CD8-positive, alpha-beta T cell (primary cell): ENCODE measurements at regions of chr17 and their contacts with region 1.

Region 1: DNA sequence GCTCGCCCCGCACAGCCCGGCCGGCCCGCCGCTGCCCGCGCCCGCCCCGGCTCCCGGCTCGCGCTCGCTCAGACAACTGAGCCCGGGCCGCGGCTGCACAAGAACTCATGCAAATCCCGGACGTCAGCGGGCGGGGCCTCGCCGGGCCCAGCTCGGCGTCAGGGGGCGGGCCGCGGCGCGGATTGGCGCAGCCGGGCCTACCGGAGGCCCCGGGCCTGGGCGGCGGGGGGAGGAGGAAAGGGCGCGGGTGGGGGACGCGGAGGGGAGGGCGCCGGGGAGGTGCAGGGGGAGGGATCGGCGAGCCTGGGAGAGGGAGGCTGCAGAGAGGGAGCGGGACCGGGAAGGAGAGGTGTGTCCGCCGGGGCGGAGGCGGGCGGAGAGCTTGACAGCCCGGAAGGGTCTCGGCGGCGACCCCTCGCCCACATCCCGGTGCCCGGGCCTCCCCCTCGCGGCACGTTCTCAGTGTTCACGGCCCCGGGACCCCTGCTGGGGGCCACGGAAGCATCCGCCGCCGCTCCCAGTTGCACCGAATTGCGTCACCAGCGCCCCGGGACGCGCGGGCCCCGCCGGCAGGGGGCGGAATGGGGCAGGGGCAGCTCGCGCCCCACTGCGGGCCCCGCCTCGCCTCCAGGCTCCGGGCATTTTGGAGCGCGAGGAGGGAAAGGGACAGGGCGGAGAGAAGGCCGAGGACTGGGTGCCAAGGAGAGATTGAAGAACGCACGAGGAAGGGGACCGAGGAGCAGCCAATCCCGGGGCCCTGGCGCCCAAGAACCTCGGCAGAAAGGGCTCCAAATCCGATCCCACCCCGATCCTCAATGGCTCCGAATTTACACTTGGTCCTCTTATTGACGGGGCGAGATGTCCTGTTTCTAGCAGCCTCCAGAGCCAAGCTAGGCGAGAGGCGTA is at the start of gene CBX4:
- DNase-seq: peak; percentile 83 to 96 (median 92)
- ATAC-seq: peak; percentile 72
- H3K4me3 ChIP-seq: peak within 1 kb of the TSS; percentile 85 to 90
- H3K4me3 Mint-ChIP-seq: peak within 1 kb of the TSS; percentile 98
- H3K27ac ChIP-seq: peak within 1 kb of the TSS; percentile 68 to 89
- H3K27ac Mint-ChIP-seq: peak within 1 kb of the TSS; percentile 98
- H3K4me1 ChIP-seq: peaks cover 81% of the 10 kb centered on the region
- H3K4me1 Mint-ChIP-seq: peaks cover 44% of the 10 kb centered on the region
- H3K27me3 ChIP-seq: peaks cover 36 to 40% of the 10 kb centered on the region in 2 experiments
- H3K27me3 Mint-ChIP-seq: peaks cover 22% of the 10 kb centered on the region
- CTCF ChIP-seq: peak; percentile 75
- total RNA-seq, gene CBX4: 263 to 268 TPM

Region 2: DNA sequence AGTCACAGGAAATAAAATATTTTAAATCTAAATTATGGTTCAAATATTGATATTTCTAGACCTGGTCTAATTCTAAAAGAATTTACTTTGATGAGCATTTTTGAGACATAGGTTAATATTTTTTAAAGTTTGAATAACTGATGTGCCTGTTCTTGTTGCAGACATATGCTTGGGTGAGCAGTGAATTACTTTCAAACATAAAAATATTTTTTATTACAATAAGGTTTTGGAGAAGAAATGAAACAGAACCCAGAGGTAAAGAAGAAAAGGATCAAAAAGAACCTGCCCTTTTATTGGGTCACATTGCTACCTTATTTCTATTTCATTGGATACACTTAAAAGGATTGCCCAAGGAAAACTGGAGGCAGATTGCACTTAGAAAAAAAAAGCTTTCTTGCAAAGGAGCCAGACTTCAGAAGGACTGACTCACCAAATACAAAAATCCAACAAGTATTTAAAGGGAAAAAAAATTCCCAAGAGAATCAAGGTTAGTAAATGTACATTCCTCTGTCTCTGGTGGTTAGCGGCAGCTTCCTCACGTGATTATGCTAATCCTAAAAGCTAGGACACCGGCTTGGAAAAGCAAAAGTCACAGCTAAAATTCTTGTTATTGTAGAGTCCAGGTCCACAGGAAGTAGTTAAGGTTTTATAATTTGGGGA is 90.3 kb before region 1 on chr17:
- CTCF ChIA-PET with region 1: interaction called, 4 read pairs
- POLR2A ChIA-PET with region 1: no interaction called
- intact Hi-C with region 1: loop called in 1 of 2 experiments (anchors 1 kb)
- DNase-seq: no peak
- ATAC-seq: no peak
- H3K4me3 ChIP-seq: no peak overlapping the region
- H3K4me3 Mint-ChIP-seq: no peak overlapping the region
- H3K27ac ChIP-seq: no peak overlapping the region
- H3K27ac Mint-ChIP-seq: no peak overlapping the region
- H3K4me1 ChIP-seq: peaks cover 24% of the 10 kb centered on the region
- H3K4me1 Mint-ChIP-seq: peaks cover 17% of the 10 kb centered on the region
- H3K27me3 ChIP-seq: peaks cover 20 to 31% of the 10 kb centered on the region in 2 experiments
- H3K27me3 Mint-ChIP-seq: peaks cover 46% of the 10 kb centered on the region
- CTCF ChIP-seq: no peak

Region 3: DNA sequence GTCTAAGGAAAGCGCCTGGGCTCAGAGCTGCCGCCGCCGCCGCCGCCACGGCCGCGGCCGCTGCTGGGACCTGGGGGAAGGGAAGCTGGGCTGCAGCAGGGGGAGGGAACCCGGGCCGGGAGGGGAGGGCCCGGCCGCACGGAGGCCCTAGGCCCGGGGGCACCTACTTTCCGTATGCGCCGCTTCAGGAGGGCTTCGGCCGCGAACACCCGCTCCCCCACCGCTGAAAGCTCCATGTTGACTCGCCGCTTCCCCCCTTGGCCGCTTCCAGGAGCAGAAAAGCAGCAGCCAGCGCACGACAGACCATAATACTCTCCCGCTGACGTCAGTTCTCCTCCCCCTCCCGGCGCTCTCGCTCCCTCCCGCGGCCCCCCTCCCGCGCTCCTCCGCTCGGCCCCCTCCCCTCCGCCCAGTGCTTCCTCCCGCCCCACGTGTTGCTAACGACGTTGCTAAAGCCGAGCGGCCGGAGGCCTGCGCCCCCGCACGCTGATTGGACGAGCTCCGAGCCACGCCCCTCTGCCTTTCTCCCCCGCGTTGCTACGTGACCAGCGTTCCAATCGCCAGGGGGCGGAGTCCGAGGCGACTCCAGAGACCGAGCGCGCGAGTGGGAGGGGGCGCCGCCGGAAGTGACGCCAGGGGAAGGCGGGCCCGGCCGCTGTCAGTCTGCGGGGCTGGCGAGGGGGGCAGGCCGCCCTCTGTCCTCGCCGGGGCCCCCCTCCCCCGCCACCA is 42.7 kb before region 1 on chr17 and contains the start of gene CBX8:
- CTCF ChIA-PET with region 1: interaction called, 13 read pairs
- POLR2A ChIA-PET with region 1: interaction called, 41 read pairs
- intact Hi-C with region 1: loop called (anchors 1 kb)
- DNase-seq: peak; percentile 98 to 100 (median 99)
- ATAC-seq: peak; percentile 87
- H3K4me3 ChIP-seq: peak within 1 kb of the TSS; percentile 51 to 68
- H3K4me3 Mint-ChIP-seq: peak within 1 kb of the TSS; percentile 86
- H3K27ac ChIP-seq: peak within 1 kb of the TSS; percentile 60 to 72
- H3K27ac Mint-ChIP-seq: peak within 1 kb of the TSS; percentile 91
- H3K4me1 ChIP-seq: peaks cover 48% of the 10 kb centered on the region
- H3K4me1 Mint-ChIP-seq: peaks cover 38% of the 10 kb centered on the region
- H3K27me3 ChIP-seq: peaks cover 47 to 48% of the 10 kb centered on the region in 2 experiments
- H3K27me3 Mint-ChIP-seq: peaks cover 37% of the 10 kb centered on the region
- CTCF ChIP-seq: no peak
- total RNA-seq, gene CBX8: 3.7 to 4.0 TPM

Region 4: GRCh38 chr17:79810130-79811010 is 29.2 kb before region 1 on chr17:
- CTCF ChIA-PET with region 1: interaction called, 20 read pairs
- POLR2A ChIA-PET with region 1: interaction called, 66 read pairs
- intact Hi-C with region 1: loop called (anchors 1 to 2 kb)
- DNase-seq: peak; percentile 48 to 91 (median 74)
- ATAC-seq: peak; percentile 91
- H3K4me3 ChIP-seq: no peak overlapping the region
- H3K4me3 Mint-ChIP-seq: no peak overlapping the region
- H3K27ac ChIP-seq: no peak overlapping the region
- H3K27ac Mint-ChIP-seq: no peak overlapping the region
- H3K4me1 ChIP-seq: peaks cover 40% of the 10 kb centered on the region
- H3K4me1 Mint-ChIP-seq: peaks cover 28% of the 10 kb centered on the region
- H3K27me3 ChIP-seq: peaks cover 75 to 82% of the 10 kb centered on the region in 2 experiments
- H3K27me3 Mint-ChIP-seq: peaks cover 67% of the 10 kb centered on the region
- CTCF ChIP-seq: no peak

Region 5: GRCh38 chr17:79997011-79997660 is 157.5 kb after region 1 on chr17:
- CTCF ChIA-PET with region 1: interaction called, 3 read pairs
- POLR2A ChIA-PET with region 1: interaction called, 14 read pairs
- intact Hi-C with region 1: loop called (anchors 2 kb)
- DNase-seq: peak; percentile 59 to 97 (median 77)
- ATAC-seq: peak; percentile 94
- H3K4me3 ChIP-seq: peak overlapping the region; percentile 35 to 42
- H3K4me3 Mint-ChIP-seq: peak overlapping the region; percentile 75
- H3K27ac ChIP-seq: peak overlapping the region; percentile 63 to 88
- H3K27ac Mint-ChIP-seq: peak overlapping the region; percentile 94
- H3K4me1 ChIP-seq: peaks cover 50% of the 10 kb centered on the region
- H3K4me1 Mint-ChIP-seq: peaks cover 50% of the 10 kb centered on the region
- H3K27me3 ChIP-seq: peaks cover 0 to 6% of the 10 kb centered on the region in 2 experiments
- H3K27me3 Mint-ChIP-seq: no peaks in the 10 kb centered on the region
- CTCF ChIP-seq: no peak

Region 6: GRCh38 chr17:80892019-80892855 is 1052.6 kb after region 1 on chr17:
- CTCF ChIA-PET with region 1: no interaction called
- POLR2A ChIA-PET with region 1: no interaction called
- intact Hi-C with region 1: loop called in 1 of 2 experiments (anchors 5 kb)
- DNase-seq: peak; percentile 55 to 94 (median 74)
- ATAC-seq: peak; percentile 83
- H3K4me3 ChIP-seq: peak overlapping the region in 1 of 2 experiments; percentile 21
- H3K4me3 Mint-ChIP-seq: peak overlapping the region; percentile 68
- H3K27ac ChIP-seq: peak overlapping the region; percentile 47 to 89
- H3K27ac Mint-ChIP-seq: peak overlapping the region; percentile 96
- H3K4me1 ChIP-seq: peaks cover 32% of the 10 kb centered on the region
- H3K4me1 Mint-ChIP-seq: peaks cover 41% of the 10 kb centered on the region
- H3K27me3 ChIP-seq: no peaks in the 10 kb centered on the region
- H3K27me3 Mint-ChIP-seq: no peaks in the 10 kb centered on the region
- CTCF ChIP-seq: no peak